Dorsolateral prefrontal cortex (tissue), 120 donors: ENCODE measurements at regions of chr1 and their contacts with region 1.

Region 1: GRCh38 chr1:178542560-178543356 is 29.8 kb downstream of the TEX35 start:
- DNase-seq: peak; percentile 75 to 94 (median 82)
- H3K4me3 ChIP-seq: peak overlapping the region; percentile 55 to 94 (median 82)
- H3K27ac ChIP-seq: peak overlapping the region in 54 of 59 donors; percentile 4 to 92 (median 78)
- H3K27me3 ChIP-seq: no peaks in the 10 kb centered on the region
- CTCF ChIP-seq: peak; percentile 83 to 99 (median 97)

Region 2: DNA sequence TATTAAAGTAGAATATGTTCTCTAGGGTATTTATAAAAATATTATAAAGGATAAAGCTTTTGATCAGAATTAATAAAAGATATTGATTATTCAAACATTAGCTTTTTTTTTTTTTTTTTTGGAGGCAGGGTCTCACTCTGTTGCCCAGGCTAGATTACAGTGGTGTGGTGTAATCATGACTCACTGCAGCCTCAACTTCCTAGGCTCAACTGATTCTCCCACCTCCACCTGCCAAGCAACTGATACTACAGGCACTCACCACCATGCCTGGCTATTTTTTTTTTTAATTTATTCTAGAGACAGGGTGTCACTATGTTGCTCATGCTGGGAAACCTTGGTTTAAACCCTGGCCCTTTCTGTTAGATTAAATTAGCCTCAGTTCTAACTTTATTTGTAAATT is 234.3 kb before region 1 on chr1:
- intact Hi-C with region 1: no loop called
- DNase-seq: no peak
- H3K4me3 ChIP-seq: no peak overlapping the region
- H3K27ac ChIP-seq: no peak overlapping the region
- H3K27me3 ChIP-seq: no peaks in the 10 kb centered on the region
- CTCF ChIP-seq: no peak

Region 3: DNA sequence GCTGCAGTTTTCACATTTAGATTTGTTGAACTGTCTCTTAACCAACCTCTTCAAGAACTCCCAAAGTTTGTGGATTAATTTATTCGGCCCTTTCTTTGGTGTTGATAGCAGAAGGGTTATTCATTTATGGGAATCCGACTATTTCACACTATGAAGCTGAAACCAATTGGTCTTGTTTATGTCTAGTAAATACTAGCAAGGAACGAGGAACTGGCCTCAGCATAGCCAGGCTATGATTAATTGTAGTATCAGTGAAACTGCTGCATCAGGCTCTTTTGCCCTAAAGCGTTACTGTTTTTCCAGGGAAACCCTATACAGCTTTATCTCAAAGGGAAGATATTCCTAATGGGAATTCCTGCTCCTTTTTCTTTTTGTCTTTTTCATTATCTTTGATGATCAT is 81.1 kb before region 1 on chr1:
- intact Hi-C with region 1: no loop called
- DNase-seq: no peak
- H3K4me3 ChIP-seq: no peak overlapping the region
- H3K27ac ChIP-seq: no peak overlapping the region
- H3K27me3 ChIP-seq: no peaks in the 10 kb centered on the region
- CTCF ChIP-seq: no peak

Region 4: DNA sequence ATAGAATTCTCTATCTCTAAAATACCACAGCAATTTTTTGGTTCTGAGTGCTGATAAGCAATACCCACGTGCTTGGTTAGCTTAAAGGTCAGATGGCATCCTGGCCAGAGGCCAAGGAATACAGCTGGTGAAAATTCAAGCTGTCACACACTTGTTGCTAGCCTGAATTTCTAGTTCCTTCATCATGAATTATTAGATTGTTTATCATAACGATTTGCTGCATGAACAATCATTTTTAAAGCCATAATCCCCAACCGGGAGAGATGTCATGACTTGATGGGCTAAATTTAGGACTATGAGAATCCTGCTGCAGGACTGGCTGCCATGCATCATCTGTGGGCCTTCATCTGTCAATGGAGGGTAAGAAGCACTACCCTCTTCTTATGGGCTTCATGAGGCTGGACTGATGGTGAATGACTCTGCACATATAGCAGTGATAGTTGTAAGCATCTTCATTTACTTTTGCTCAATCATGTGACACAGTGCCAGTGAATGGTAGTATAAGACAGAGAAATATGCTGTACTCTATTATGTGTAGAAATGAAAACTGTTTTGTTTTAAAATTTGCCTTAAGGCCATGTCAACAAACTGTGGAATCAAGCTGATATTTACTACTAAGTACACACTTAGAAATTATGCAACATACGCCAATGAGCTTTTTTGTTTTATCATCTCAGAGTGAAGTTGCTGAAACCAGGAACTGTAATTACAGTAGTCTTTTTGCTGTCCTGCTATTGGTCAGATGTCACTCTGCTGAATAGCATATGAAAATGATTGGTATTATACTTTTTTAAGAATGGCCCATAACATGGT is 101.8 kb after region 1 on chr1:
- intact Hi-C with region 1: no loop called
- DNase-seq: no peak
- H3K4me3 ChIP-seq: no peak overlapping the region
- H3K27ac ChIP-seq: peak overlapping the region in 2 of 59 donors; percentile 18 to 25
- H3K27me3 ChIP-seq: no peaks in the 10 kb centered on the region
- CTCF ChIP-seq: no peak

Region 5: DNA sequence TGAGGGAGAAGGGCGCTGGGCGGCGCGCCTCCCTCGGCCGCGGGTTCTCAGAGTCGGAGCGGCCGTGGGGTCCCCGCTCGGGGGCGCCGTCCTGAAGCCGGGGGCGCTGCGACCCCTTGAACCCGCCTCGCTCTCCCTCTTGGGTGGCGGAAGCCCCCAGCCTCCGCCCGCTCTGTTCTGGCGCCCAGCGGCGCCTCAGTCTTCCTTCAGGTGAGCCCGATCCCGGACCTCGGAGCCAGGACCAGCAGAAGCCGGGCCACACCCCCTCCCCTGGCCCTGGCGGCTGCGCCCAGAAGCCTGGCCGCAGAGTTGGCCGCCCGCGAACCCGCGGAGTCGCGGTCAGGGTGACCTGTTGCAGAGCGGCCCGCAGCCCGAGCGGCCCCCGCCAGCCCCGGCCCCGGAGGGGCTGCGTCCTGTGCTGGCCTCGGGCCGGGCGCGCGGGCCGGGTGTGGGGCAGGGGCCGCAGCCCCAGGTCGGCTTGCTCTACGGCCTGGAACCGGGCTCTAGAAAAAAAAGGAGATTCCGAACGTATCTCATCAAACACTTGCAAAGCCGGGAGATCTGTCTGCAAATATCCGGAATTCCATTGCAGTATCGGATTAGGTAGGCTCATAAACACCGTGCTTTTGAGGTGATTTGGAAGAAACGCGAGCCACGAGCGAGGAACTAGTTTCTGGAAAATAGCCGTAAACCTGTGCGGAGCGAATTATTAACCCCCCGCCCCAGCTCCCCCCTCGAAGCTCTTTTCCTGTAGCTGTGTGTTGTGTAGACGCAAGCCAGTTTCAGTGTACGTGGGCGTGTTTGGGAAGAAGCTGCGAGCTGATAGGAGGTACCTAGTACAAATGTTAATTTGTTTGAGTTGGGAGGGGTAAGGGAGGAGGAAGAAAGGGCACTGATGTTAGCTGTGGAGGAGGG is 183.1 kb after region 1 on chr1:
- intact Hi-C with region 1: loop called in 1 of 2 experiments (anchors 10 kb)
- DNase-seq: peak in 9 of 10 donors; percentile 38 to 58 (median 48)
- H3K4me3 ChIP-seq: peak overlapping the region; percentile 59 to 96 (median 80)
- H3K27ac ChIP-seq: peak overlapping the region in 50 of 59 donors; percentile 29 to 89 (median 75)
- H3K27me3 ChIP-seq: no peaks in the 10 kb centered on the region
- CTCF ChIP-seq: peak in 5 of 56 donors; percentile 4 to 22 (median 17)

Region 6: GRCh38 chr1:178749581-178750166 is 206.9 kb after region 1 on chr1:
- intact Hi-C with region 1: loop called (anchors 2 kb)
- DNase-seq: no peak
- H3K4me3 ChIP-seq: no peak overlapping the region
- H3K27ac ChIP-seq: no peak overlapping the region
- H3K27me3 ChIP-seq: no peaks in the 10 kb centered on the region
- CTCF ChIP-seq: no peak